Activated naive CD4-positive, alpha-beta T cell treated with anti-CD3 and anti-CD28 coated beads for 36 hours (primary cell): ENCODE measurements at regions of chr5 and their contacts with region 1.

Region 1: GRCh38 chr5:41903892-41904799 is at the start of gene RIMOC1:
- DNase-seq: peak; percentile 98
- H3K4me3 Mint-ChIP-seq: peak within 1 kb of the TSS; percentile 79
- H3K27ac Mint-ChIP-seq: peak within 1 kb of the TSS; percentile 88
- H3K4me1 Mint-ChIP-seq: peaks cover 38% of the 10 kb centered on the region
- H3K27me3 Mint-ChIP-seq: no peaks in the 10 kb centered on the region
- total RNA-seq, gene RIMOC1: 16.6 to 19.6 TPM

Region 2: GRCh38 chr5:41748631-41749030 is 155.5 kb before region 1 on chr5:
- CTCF ChIA-PET with region 1: no interaction called
- intact Hi-C with region 1: loop called (anchors 1 kb)
- DNase-seq: peak; percentile 63
- H3K4me3 Mint-ChIP-seq: no peak overlapping the region
- H3K27ac Mint-ChIP-seq: no peak overlapping the region
- H3K4me1 Mint-ChIP-seq: peaks cover 34% of the 10 kb centered on the region
- H3K27me3 Mint-ChIP-seq: no peaks in the 10 kb centered on the region

Region 3: GRCh38 chr5:41869739-41870626 is 34.2 kb before region 1 on chr5 and contains the start of gene OXCT1:
- CTCF ChIA-PET with region 1: no interaction called
- intact Hi-C with region 1: loop called (anchors 1 kb)
- DNase-seq: peak; percentile 93
- H3K4me3 Mint-ChIP-seq: peak within 1 kb of the TSS; percentile 92
- H3K27ac Mint-ChIP-seq: peak within 1 kb of the TSS; percentile 88
- H3K4me1 Mint-ChIP-seq: peaks cover 53% of the 10 kb centered on the region
- H3K27me3 Mint-ChIP-seq: no peaks in the 10 kb centered on the region
- total RNA-seq, gene OXCT1: 76.1 to 78.8 TPM

Region 4: DNA sequence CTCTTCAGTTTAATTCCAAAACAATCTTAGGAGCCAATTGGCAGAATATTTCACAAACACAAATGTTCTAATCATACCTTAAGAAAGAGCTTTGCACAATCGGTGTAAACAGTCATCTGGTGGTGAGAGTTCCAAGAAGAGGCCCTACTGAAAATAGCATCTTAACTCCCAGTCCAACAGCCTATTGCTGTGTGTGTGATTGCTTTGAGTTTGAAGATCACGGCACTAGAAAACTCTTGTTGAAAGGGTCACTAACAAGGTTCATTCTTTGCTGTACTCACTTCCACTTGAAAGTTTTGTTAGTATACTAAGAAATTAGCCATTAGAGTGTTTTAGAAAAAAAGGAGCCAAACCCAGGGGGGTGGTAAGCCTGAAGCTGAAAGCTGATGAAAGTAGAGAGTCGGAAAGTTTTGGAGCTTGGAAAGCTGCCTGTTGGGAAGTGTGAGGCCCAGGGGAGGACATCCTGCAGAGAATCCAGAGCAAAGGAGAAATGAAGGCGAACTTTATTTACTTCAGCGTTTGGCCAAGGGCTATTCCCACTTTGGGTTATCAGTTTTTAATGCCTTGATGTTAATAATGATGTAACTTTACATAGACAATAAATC is 338.8 kb after region 1 on chr5:
- CTCF ChIA-PET with region 1: no interaction called
- intact Hi-C with region 1: no loop called
- DNase-seq: no peak
- H3K4me3 Mint-ChIP-seq: no peak overlapping the region
- H3K27ac Mint-ChIP-seq: no peak overlapping the region
- H3K4me1 Mint-ChIP-seq: no peaks in the 10 kb centered on the region
- H3K27me3 Mint-ChIP-seq: no peaks in the 10 kb centered on the region